ENCODE measurements at regions of chr17 and their contacts with region 1.

Region 1: GRCh38 chr17:48586355-48587258 is 3.4 kb downstream of the HOXB3 start:
- DNase-seq: peak; percentile 41
- ATAC-seq: no peak
- H3K4me3 ChIP-seq: peak overlapping the region; percentile 91
- H3K27ac ChIP-seq: peak overlapping the region; percentile 99
- H3K4me1 ChIP-seq: peaks cover 12% of the 10 kb centered on the region
- H3K27me3 ChIP-seq: no peaks in the 10 kb centered on the region
- CTCF ChIP-seq: no peak
- POLR2A ChIP-seq: no peak
- RAD21 ChIP-seq: no peak

Region 2: DNA sequence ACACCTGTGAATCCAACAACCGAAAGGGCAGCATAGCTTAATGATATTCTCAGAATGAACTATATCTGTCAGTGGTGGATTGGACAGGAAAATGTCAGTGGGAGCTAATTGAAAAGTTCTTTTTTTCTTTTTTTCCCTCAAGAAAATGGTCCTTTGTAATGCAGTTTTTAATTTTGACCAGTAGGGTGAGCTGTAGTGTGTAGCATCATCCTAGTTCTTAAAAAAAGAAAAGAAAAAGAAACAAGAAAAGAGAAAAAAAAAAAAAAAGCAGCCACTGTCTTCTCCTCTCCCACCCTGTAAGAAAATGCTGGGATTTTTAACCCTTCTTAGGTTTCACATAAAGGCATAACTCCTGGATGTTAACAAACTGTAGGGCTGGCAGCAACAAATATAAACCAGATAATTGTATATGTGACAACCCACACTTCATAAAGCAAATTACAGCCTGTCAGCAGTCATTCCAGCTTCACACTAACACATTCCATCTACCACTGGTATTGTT is 234.7 kb before region 1 on chr17:
- CTCF ChIA-PET with region 1: interaction called, 15 read pairs
- POLR2A ChIA-PET with region 1: no interaction called
- dilution Hi-C with region 1: no loop called
- in situ Hi-C with region 1: no loop called
- intact Hi-C with region 1: no loop called
- DNase-seq: peak; percentile 67
- ATAC-seq: peak; percentile 63
- H3K4me3 ChIP-seq: no peak overlapping the region
- H3K27ac ChIP-seq: no peak overlapping the region
- H3K4me1 ChIP-seq: 0 out of 2 replicates have a peak, but pooled peaks cover 1% of the 10 kb centered on the region
- H3K27me3 ChIP-seq: peaks cover 32% of the 10 kb centered on the region
- CTCF ChIP-seq: peak; percentile 78
- POLR2A ChIP-seq: no peak
- RAD21 ChIP-seq: peak; percentile 77

Measured in IMR-90 (cell line).